ENCODE measurements at regions of chr3 and their contacts with region 1.

Region 1: DNA sequence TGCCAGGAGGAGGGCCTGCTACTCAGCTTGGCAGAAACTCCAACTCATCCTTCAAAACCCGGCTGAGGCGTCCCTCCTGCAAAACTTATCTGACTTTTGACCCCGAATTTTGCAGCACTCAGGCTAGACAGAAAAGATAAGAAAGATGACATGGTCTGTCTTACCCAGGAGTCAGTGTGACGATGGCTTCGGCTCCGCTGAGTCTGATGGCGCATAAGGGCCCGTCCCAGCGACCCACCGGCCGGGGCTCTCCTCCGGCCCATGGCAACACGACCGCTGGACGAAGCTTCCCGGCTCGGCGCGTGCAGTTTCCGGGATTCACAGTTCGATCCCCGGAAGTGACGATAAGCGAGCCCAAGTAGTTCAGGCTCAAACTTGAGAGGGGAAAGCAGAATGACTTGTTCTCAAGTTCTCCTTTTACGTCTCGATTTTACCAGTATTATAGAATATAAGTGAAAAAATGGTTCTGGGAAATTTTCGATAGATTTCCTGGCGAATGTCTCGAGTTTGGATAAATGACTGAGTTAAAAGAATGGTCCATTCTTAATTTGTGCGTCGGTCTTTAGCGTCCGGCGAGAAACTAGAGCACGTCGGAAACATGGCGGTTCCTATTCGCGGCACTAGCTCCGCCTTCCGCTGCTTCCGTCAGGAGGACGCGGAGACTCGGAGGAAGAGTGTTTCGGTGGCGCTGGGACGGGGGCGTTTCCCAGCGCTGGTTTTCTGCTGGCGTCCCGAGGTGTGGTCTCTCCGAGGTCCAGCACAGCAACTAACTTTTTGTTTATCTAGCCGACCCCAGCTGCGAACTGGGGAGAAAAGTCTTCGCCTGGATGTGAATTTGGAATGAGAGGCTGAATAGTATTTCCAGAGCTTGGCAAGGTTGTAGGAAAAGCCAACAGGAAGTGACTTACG is at the start of gene LSG1:
- DNase-seq: peak; percentile 94
- ATAC-seq: peak; percentile 84
- H3K4me3 Mint-ChIP-seq: peak within 1 kb of the TSS; percentile 100
- H3K27ac Mint-ChIP-seq: peak within 1 kb of the TSS; percentile 96
- H3K4me1 Mint-ChIP-seq: peaks cover 59% of the 10 kb centered on the region
- H3K27me3 Mint-ChIP-seq: peaks cover 6% of the 10 kb centered on the region
- total RNA-seq, gene LSG1: 41.4 to 43.9 TPM

Region 2: DNA sequence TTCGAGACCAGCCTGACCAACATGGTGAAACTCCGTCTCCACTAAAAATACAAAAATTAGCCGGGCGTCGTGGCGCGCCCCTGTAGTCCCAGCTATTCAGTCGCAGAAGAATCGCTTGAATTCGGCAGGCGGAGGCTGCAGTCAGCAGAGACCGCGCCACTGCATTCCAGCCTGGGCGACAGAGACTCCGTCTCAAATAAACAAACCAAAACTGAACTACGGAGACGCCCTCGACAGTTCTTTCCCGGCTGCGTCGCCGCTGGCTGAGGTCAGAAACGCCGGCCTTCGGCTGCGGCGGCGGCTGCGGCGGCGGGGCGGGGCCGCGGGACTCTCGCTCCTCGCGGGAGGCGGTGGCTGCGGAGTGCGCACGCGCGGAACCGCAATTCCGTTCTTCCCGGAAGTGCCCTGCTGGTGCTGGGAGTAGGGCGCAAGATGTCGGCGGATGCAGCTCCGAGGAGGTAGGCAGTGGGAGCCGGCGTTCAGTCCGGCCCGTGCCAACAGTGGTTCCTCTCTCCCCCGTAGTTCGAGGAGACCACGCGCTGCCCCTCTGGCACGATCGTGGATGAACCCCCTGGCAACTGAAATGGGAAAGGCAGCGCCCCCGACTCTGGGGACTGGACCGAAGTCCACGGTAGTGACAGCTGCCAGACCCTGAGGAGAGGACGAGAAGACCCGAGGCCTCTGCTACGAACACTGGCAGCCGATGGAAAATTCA is 88.4 kb before region 1 on chr3:
- CTCF ChIA-PET with region 1: no interaction called
- POLR2A ChIA-PET with region 1: interaction called, 3 read pairs
- intact Hi-C with region 1: loop called in 1 of 2 experiments (anchors 1 kb)
- DNase-seq: peak; percentile 96
- ATAC-seq: peak; percentile 88
- H3K4me3 Mint-ChIP-seq: peak overlapping the region; percentile 93
- H3K27ac Mint-ChIP-seq: peak overlapping the region; percentile 97
- H3K4me1 Mint-ChIP-seq: peaks cover 25% of the 10 kb centered on the region
- H3K27me3 Mint-ChIP-seq: no peaks in the 10 kb centered on the region

Region 3: GRCh38 chr3:194682694-194683310 is 10.6 kb after region 1 on chr3:
- CTCF ChIA-PET with region 1: interaction called, 156 read pairs
- POLR2A ChIA-PET with region 1: interaction called, 7 read pairs
- intact Hi-C with region 1: loop called (anchors 1 kb)
- DNase-seq: peak; percentile 77
- ATAC-seq: peak; percentile 73
- H3K4me3 Mint-ChIP-seq: no peak overlapping the region
- H3K27ac Mint-ChIP-seq: no peak overlapping the region
- H3K4me1 Mint-ChIP-seq: peaks cover 41% of the 10 kb centered on the region
- H3K27me3 Mint-ChIP-seq: peaks cover 30% of the 10 kb centered on the region

Region 4: DNA sequence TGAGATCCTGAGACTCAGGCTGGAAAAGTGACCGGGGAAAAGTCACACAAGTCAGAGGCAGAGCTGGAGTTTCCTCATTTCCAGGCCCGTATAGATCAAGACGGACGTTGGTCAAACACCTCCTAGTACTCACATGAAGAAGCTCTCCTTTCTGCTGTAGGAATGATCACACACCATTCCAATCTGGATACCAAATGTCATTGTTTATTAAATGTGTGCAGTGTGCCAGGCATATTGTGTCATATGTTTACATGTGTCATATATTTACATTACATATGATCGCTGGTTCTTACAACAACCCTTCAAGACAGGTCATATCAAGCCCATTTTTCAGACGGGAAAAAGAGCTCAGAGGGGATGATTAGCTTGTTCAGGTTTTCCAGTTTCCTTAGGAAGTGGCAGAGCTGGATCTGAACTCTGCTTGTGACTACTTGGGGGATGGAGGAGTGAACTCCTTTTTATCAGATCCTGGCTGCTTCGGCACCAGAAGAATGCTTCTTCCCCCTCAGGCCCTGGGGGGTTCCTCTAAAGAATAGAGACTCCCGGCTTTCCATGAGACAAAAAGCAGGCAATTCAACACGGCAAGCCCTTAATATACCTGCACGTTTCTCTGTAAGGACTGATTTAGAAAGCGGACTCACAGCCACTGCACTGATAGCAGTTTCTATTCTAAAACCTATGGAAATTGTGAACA is 55.4 kb after region 1 on chr3:
- CTCF ChIA-PET with region 1: no interaction called
- POLR2A ChIA-PET with region 1: no interaction called
- intact Hi-C with region 1: no loop called
- DNase-seq: no peak
- ATAC-seq: no peak
- H3K4me3 Mint-ChIP-seq: no peak overlapping the region
- H3K27ac Mint-ChIP-seq: no peak overlapping the region
- H3K4me1 Mint-ChIP-seq: no peaks in the 10 kb centered on the region
- H3K27me3 Mint-ChIP-seq: peaks cover 11% of the 10 kb centered on the region

Region 5: DNA sequence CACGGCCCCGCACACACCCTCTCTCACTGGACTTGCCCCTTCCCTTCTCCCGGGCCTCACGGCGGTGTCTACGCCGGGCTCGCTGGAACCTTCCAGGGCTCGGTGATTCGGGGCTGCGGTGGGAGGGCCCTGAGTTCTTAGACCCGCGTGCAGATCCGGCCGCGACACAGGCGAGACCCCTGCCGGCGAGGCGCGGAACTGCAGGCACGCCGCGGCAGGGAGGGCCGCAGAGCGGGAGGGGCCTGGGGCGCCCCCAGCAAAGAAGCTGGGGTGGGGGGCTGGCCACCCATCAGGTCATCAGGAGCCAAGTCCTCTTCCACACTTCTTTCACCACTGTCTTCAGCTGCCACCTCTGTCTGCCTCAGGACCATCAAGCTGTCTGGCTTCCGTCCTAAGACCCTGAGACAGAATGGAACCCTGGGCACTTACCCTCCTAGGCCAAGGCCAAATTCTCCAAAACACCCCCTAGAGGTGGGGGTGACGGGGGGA is 434.3 kb after region 1 on chr3:
- CTCF ChIA-PET with region 1: interaction called, 8 read pairs
- POLR2A ChIA-PET with region 1: no interaction called
- intact Hi-C with region 1: loop called in 1 of 2 experiments (anchors 1 kb)
- DNase-seq: peak; percentile 80
- ATAC-seq: peak; percentile 85
- H3K4me3 Mint-ChIP-seq: peak overlapping the region; percentile 9
- H3K27ac Mint-ChIP-seq: peak overlapping the region; percentile 55
- H3K4me1 Mint-ChIP-seq: peaks cover 4% of the 10 kb centered on the region
- H3K27me3 Mint-ChIP-seq: no peaks in the 10 kb centered on the region

Region 6: DNA sequence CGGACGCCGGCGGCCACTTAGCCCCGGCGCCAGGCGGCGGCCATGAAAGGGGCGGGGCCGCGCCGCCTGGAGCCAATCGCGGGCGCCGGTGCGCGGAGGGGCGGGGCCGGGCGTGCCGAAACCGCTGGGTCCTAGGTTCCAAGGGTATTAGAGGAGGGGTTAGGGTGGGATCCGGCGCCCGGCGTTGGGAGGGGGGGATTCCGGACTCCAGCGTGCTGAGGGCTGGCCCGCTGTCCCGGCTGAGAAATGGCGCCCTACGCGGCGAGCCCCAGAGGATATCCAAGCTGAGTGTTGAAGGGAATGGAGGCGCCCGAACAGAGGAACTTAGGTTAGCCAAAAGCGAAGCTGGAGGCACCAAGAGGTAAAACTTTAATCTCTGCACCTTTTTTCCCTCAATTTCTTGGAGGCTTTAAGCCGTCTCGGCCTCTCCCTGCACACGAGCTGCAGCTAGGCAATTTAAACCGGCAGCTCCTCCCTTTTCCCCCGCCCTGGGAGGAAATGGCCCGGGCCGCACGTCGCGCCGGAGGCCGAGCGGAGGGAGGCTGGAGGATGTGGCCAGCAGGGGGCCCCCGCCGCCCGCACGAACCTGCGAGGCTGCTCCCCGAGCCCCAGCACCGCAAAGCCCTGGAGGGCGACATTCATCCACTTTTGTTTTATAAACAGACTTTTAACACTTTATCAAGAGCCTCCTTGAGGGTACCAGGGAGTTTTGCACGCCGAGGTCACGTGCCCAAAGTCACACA is 599.1 kb after region 1 on chr3 and contains the start of gene XXYLT1:
- CTCF ChIA-PET with region 1: interaction called, 15 read pairs
- POLR2A ChIA-PET with region 1: no interaction called
- intact Hi-C with region 1: loop called in 1 of 2 experiments (anchors 1 kb)
- DNase-seq: peak; percentile 96
- ATAC-seq: peak; percentile 86
- H3K4me3 Mint-ChIP-seq: peak within 1 kb of the TSS; percentile 84
- H3K27ac Mint-ChIP-seq: peak within 1 kb of the TSS; percentile 87
- H3K4me1 Mint-ChIP-seq: peaks cover 17% of the 10 kb centered on the region
- H3K27me3 Mint-ChIP-seq: no peaks in the 10 kb centered on the region
- total RNA-seq, gene XXYLT1: 5.4 to 5.7 TPM

Region 7: GRCh38 chr3:195909644-195910508 is 1237.7 kb after region 1 on chr3:
- CTCF ChIA-PET with region 1: no interaction called
- POLR2A ChIA-PET with region 1: no interaction called
- intact Hi-C with region 1: loop called in 1 of 2 experiments (anchors 5 kb)
- DNase-seq: peak; percentile 94
- ATAC-seq: peak; percentile 67
- H3K4me3 Mint-ChIP-seq: peak overlapping the region; percentile 68
- H3K27ac Mint-ChIP-seq: peak overlapping the region; percentile 65
- H3K4me1 Mint-ChIP-seq: peaks cover 38% of the 10 kb centered on the region
- H3K27me3 Mint-ChIP-seq: no peaks in the 10 kb centered on the region

Measured in activated CD4-positive, alpha-beta T cell treated with anti-CD3 and anti-CD28 coated beads for 36 hours (primary cell).